Dorsolateral prefrontal cortex (tissue), 120 donors: ENCODE measurements at regions of chr19 and their contacts with region 1.

Region 1: DNA sequence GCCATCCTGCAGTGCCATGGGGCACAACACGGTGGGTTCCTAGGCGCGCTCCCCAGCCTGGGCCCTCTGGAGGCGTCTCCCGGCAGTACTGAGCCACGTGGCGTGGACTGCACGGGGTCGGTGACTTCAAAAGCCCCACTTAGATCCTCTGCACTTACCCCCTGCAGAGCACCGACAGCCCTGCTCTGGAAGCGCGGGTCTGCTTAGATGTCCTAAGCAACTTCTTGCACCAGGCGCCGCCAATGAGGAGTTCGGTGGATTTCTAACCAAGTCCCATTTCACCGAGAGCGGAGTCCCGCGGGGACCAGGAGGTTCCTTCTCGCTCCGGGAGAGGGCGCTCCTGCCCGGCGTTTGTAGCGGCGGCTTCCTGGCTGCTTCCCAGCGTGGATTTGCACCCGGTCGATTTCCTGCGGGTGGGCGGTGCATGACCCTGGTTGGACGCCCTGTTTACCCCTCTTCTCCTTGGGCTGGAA is 25.2 kb upstream of the ZNF845 start:
- DNase-seq: peak in 4 of 10 donors; percentile 4 to 50 (median 36)
- H3K4me3 ChIP-seq: peak overlapping the region in 11 of 59 donors; percentile 4 to 32 (median 18)
- H3K27ac ChIP-seq: no peak overlapping the region
- H3K27me3 ChIP-seq: peaks cover 0 to 62% (median 23%) of the 10 kb centered on the region in 45 donors
- CTCF ChIP-seq: peak in 53 of 56 donors; percentile 25 to 78 (median 57)

Region 2: GRCh38 chr19:53294786-53295441 is 13.5 kb before region 1 on chr19:
- intact Hi-C with region 1: no loop called
- DNase-seq: no peak
- H3K4me3 ChIP-seq: no peak overlapping the region
- H3K27ac ChIP-seq: no peak overlapping the region
- H3K27me3 ChIP-seq: no peaks in the 10 kb centered on the region
- CTCF ChIP-seq: no peak

Region 3: DNA sequence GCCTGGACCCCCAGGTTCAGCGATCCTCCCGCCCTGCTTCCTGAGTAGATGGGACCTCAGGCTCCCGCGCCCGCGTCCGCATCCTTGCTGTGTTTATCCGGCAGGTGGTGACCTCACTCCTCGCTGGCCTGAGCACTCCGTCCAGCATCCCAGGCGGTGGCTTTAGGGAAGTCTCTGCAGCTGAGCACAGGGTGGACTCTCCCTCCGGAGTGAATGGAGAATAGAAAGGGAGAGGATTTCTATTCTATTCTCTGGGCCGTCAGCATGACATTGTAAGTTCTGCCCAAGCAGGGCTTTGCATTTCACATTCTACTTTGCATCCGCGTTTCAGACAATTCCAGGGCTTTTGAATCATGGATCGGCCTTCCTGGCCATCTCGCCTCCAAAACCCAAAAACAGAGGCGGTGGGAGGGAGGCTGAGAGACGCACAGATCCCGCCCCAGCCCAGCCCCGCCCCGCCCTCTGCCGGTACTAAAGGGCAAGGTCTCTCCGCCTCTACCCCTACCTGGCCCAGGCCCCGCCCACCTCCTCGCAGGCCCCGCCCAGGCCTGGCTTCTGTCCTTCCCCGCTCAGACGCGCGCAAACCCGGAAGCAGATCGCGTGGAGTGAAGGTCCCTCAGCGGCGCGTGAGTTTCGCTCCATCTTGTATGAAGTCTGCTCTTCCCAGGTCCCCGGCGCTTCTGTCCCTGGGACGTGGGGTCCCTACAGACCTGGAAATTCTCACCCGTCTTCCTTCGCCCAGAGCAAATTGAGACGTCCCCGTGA is 56.9 kb after region 1 on chr19 and contains the start of gene ZNF525:
- intact Hi-C with region 1: loop called in 1 of 2 experiments (anchors 10 kb)
- DNase-seq: peak; percentile 68 to 97 (median 89)
- H3K4me3 ChIP-seq: peak within 1 kb of the TSS; percentile 52 to 90 (median 75)
- H3K27ac ChIP-seq: peak within 1 kb of the TSS in 39 of 59 donors; percentile 14 to 80 (median 65)
- H3K27me3 ChIP-seq: no peaks in the 10 kb centered on the region
- CTCF ChIP-seq: peak in 36 of 56 donors; percentile 5 to 54 (median 26)
- total RNA-seq, gene ZNF525: 6.4 to 32.3 (median 11.1) TPM